Activated T-helper 2 cell treated with anti-CD3 and anti-CD28 coated beads, Interferon-gamma antibody, Interleukin-2, Interleukin-4, amounts not matched to agents 10 μg/mL and 5 μg/mL and 100 μg/mL, durations not matched to agents 14 hours and 24 hours and 36 hours (primary cell): ENCODE measurements at regions of chr10 and their contacts with region 1.

Region 1: GRCh38 chr10:118568327-118568848 is 27.1 kb downstream of the PRLHR start:
- DNase-seq: peak; percentile 19
- H3K4me3 Mint-ChIP-seq: no peak overlapping the region
- H3K27ac Mint-ChIP-seq: no peak overlapping the region
- H3K4me1 Mint-ChIP-seq: peaks cover 3% of the 10 kb centered on the region
- H3K27me3 Mint-ChIP-seq: no peaks in the 10 kb centered on the region

Region 2: GRCh38 chr10:118471863-118472262 is 96.5 kb before region 1 on chr10:
- intact Hi-C with region 1: no loop called
- DNase-seq: no peak
- H3K4me3 Mint-ChIP-seq: no peak overlapping the region
- H3K27ac Mint-ChIP-seq: no peak overlapping the region
- H3K4me1 Mint-ChIP-seq: no peaks in the 10 kb centered on the region
- H3K27me3 Mint-ChIP-seq: peaks cover 1% of the 10 kb centered on the region

Region 3: DNA sequence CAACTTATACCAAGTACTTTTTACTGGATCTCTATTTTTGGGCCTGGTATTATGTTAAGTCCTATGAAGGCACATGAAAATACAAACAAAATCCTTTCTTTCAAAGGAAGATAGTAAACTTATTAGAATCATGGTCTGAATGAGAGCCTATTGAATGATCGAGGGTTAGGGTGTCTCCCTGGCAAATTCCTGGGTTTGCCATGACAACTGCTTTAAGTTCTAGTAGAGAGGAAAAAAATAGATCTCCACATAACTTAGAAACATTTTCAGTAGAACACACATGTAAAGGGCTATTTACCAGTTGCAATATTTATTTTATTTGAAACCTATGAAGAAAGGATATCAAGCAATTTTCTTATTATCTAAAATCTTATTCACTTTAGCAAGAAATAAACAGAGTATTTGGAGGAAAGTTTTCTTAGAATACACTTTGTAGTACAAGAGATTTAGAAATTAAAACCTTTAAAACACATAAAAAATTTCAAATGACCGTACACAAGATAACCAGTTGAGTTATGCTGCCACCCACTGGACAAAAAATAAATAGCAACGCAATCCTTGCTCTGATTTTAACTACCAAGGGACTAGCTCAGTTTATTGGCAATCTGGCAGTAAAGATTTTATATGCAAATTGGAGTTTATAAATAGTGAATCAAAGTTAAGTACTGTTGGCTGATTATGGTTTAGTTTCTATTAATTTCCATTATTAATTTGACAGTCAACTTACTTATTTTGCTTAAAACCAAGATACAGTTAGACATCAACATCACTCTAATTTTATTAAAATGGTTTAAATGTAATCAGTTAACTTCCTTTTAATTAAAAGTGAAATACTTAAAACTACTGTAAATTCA is 152.5 kb after region 1 on chr10:
- intact Hi-C with region 1: loop called (anchors 1 kb)
- DNase-seq: peak; percentile 30
- H3K4me3 Mint-ChIP-seq: no peak overlapping the region
- H3K27ac Mint-ChIP-seq: no peak overlapping the region
- H3K4me1 Mint-ChIP-seq: no peaks in the 10 kb centered on the region
- H3K27me3 Mint-ChIP-seq: peaks cover 2% of the 10 kb centered on the region

Region 4: DNA sequence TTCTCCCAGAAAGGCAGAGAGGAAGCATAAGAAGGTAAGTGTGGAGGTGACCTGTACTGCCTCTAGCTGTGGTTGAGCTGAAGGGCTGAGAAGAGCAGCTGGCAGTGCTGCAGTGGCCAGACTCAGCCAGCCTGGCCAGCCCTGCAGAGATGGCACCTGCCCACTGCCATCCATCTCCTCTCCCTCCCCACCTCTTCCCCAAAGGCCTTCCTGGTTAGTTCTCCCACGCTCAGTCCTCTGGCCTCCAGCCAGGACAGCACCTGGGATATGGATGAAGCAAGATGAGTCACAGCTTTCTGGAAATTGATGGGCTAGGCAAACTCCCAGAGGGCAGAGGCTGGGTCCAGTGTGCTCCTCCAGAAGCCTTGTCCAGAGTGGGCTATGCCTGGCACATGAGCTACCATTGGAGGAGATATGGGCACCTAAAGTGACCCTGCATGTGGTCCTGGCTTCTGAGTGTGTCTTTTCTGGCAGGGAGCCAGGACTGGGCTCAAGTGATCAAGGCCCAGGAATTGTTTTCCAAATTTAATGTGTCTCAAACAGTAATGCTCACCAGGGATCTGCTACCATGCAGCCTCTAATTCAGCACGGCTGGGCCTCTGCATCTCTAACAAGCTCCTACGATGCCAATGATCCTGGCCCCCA is 267.4 kb after region 1 on chr10:
- intact Hi-C with region 1: no loop called
- DNase-seq: no peak
- H3K4me3 Mint-ChIP-seq: no peak overlapping the region
- H3K27ac Mint-ChIP-seq: no peak overlapping the region
- H3K4me1 Mint-ChIP-seq: peaks cover 11% of the 10 kb centered on the region
- H3K27me3 Mint-ChIP-seq: no peaks in the 10 kb centered on the region

Region 5: DNA sequence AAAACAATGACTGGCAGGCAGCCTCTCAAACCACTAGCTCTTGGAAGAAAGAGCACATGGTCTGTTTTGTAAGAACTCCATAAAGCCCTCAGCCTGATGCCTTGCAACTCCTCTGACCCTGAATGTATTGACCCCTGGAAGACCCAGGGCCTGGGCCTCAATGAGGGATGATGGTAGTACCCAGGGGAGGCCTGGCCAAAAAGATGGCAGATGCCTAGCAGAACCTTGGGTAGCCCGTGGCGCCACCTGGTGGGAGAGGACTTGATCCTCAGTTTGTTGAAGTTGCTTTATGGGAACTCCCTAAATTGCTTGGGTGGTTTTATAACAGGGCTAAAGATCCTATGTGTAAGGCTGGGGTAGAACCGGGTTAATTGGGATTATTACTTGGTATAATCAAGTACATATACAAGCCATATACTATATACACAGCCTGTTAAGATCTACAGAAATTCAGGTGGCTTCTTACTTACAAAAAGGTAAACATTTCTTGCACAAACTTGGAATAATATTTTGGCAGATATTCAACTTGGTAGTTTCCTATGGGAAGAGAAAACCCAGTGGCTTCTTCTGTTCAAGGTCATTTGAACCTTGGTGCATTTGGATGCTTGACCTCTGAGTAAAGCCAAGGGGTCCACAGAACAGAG is 282.2 kb after region 1 on chr10:
- intact Hi-C with region 1: loop called (anchors 2 kb)
- DNase-seq: peak; percentile 48
- H3K4me3 Mint-ChIP-seq: no peak overlapping the region
- H3K27ac Mint-ChIP-seq: no peak overlapping the region
- H3K4me1 Mint-ChIP-seq: no peaks in the 10 kb centered on the region
- H3K27me3 Mint-ChIP-seq: peaks cover 9% of the 10 kb centered on the region